IMR-90 (cell line): ENCODE measurements at regions of chr18 and their contacts with region 1.

Region 1: DNA sequence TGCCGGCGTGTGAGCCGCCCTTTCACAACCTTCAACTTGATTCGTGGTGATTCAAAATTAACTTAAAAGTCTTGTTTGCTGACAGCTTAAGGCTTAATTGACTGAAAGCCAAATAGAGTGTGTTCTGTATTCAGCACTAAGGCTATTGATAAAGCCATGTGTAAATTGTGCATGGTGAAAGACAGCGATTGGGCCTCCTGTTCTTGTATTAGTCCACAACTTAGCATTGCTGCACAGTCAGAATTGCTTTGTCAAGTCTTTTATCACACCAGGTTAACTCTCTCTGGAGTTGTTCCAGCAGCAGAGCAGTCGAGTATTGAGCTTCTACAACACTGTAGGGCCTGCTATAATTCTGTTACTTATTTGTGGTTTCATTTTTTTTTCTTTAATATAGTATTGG is 210.1 kb downstream of the WDR7 start:
- DNase-seq: no peak
- ATAC-seq: no peak
- H3K4me3 ChIP-seq: no peak overlapping the region
- H3K27ac ChIP-seq: no peak overlapping the region
- H3K4me1 ChIP-seq: no peaks in the 10 kb centered on the region
- H3K27me3 ChIP-seq: no peaks in the 10 kb centered on the region
- CTCF ChIP-seq: no peak
- POLR2A ChIP-seq: no peak
- RAD21 ChIP-seq: no peak

Region 2: DNA sequence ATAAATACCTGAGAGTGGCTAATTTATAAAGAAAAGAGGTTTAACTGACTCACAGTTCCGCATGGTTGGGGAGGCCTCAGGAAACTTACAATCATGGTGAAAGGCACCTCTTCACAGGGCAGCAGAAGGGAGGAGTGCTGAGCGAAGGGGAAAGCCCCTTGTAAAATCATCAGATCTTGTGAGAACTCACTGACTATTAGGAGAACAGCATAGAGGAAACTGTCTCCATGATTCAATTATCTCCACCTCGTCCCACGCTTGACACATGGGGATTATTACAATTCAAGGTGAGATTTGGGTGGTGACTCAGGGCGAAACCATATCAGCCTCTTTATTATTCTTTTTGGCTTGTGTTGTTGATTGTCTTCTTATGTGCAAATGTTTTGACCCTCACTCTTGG is 133.8 kb before region 1 on chr18:
- CTCF ChIA-PET with region 1: no interaction called
- POLR2A ChIA-PET with region 1: no interaction called
- dilution Hi-C with region 1: no loop called
- in situ Hi-C with region 1: no loop called
- intact Hi-C with region 1: no loop called
- DNase-seq: no peak
- ATAC-seq: no peak
- H3K4me3 ChIP-seq: no peak overlapping the region
- H3K27ac ChIP-seq: no peak overlapping the region
- H3K4me1 ChIP-seq: no peaks in the 10 kb centered on the region
- H3K27me3 ChIP-seq: no peaks in the 10 kb centered on the region
- CTCF ChIP-seq: no peak
- POLR2A ChIP-seq: no peak
- RAD21 ChIP-seq: no peak

Region 3: DNA sequence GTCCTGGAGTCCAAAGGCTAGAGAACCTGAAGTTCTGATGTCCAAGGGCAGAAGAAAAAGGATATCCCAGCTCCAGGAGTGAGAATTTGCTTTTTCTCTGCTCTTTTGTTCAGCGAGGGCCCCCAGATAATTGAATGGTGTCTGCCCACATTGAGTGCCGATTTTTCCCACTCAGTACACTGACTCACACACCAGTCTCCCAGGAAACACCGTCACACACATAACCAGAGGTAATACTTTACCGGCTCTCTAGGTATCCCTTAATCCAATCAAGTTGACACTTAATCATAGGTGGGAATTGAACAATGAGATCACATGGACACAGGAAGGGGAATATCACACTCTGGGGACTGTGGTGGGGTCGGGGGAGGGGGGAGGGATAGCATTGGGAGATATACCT is 48.6 kb before region 1 on chr18:
- CTCF ChIA-PET with region 1: no interaction called
- POLR2A ChIA-PET with region 1: no interaction called
- dilution Hi-C with region 1: no loop called
- in situ Hi-C with region 1: no loop called
- intact Hi-C with region 1: loop called (anchors 5 kb)
- DNase-seq: no peak
- ATAC-seq: no peak
- H3K4me3 ChIP-seq: no peak overlapping the region
- H3K27ac ChIP-seq: no peak overlapping the region
- H3K4me1 ChIP-seq: no peaks in the 10 kb centered on the region
- H3K27me3 ChIP-seq: no peaks in the 10 kb centered on the region
- CTCF ChIP-seq: no peak
- POLR2A ChIP-seq: no peak
- RAD21 ChIP-seq: no peak